Endothelial cell of umbilical vein (primary cell): ENCODE measurements at regions of chr9 and their contacts with region 1.

Region 1: DNA sequence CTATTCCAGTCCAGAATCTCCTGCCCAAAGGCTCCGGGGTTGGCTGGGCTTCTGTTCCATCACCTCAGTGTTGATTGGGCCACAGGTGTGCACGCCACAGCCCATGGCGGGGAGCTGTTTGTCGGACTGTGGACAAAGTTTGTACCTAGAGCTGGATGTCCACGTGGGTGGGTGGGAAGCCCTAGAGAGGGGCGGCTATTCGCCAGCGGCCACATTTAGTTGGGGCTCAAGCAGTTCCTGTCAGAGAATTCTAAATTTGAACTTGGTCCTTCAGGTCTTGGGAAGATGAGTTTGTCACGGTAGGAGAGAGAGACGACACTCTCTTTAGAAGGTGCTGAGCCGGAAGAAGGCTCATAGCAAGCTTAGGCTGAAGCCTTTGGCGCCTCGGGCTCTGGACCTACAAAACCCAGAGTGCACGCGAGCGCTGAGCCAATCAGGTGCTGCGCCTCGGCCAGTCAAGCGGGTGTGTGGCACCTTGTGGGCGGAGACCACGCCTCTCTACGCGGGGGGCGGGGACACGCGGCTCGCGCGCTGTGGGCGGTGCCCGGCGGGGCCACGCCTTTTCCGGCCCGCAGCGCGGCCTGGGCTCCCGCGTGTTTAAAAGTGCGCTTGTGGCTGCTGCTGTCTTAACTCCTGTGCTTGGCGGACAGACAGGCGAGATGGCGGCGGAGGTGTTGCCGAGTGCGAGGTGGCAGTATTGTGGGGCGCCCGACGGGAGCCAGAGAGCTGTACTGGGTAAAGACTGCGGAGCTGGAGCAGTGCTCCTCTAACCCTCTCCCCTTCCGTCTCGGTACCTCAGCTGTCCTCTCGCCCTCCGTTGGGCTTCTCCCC is at the start of gene POLR1E:
- DNase-seq: peak; percentile 92
- H3K4me3 ChIP-seq: peak within 1 kb of the TSS; percentile 46 to 78 (median 76)
- H3K27ac ChIP-seq: peak within 1 kb of the TSS; percentile 36
- H3K4me1 ChIP-seq: peaks cover 16% of the 10 kb centered on the region
- H3K27me3 ChIP-seq: peaks cover 3 to 6% of the 10 kb centered on the region in 2 experiments
- CTCF ChIP-seq: no peak
- POLR2A ChIP-seq: peak; percentile 94
- total RNA-seq, gene POLR1E: 17.2 and 21.2 TPM in 2 replicates

Region 2: GRCh38 chr9:37471942-37472679 is 13.5 kb before region 1 on chr9:
- CTCF ChIA-PET with region 1: interaction called, 4 read pairs
- POLR2A ChIA-PET with region 1: no interaction called
- dilution Hi-C with region 1: no loop called
- intact Hi-C with region 1: loop called (anchors 1 kb)
- DNase-seq: peak; percentile 86
- H3K4me3 ChIP-seq: peak overlapping the region in 2 of 3 experiments; percentile 11 to 38
- H3K27ac ChIP-seq: peak overlapping the region; percentile 78
- H3K4me1 ChIP-seq: peaks cover 9% of the 10 kb centered on the region
- H3K27me3 ChIP-seq: peaks cover 0 to 2% of the 10 kb centered on the region in 2 experiments
- CTCF ChIP-seq: no peak
- POLR2A ChIP-seq: no peak

Region 3: DNA sequence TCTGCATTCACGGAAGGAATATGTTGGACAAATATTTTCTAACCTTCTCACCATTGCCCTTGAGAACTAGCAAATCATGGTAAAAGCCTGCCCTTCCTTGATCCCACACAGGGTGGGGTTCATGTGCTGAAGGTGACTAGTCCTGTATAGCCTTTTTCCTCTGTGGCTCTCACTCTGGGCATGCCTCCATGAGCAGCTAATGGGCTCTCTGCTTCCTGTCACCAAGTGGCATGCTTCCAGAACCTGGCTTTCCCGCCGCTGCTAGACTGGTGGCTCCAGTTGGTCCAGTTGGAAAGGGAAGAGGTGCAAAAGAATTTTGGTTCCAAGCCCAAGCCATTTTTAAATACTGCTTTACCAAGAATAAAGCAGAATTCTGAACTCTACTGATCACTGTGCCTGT is 55.0 kb after region 1 on chr9:
- CTCF ChIA-PET with region 1: no interaction called
- POLR2A ChIA-PET with region 1: no interaction called
- dilution Hi-C with region 1: no loop called
- intact Hi-C with region 1: no loop called
- DNase-seq: no peak
- H3K4me3 ChIP-seq: no peak overlapping the region
- H3K27ac ChIP-seq: no peak overlapping the region
- H3K4me1 ChIP-seq: no peaks in the 10 kb centered on the region
- H3K27me3 ChIP-seq: no peaks in the 10 kb centered on the region
- CTCF ChIP-seq: no peak
- POLR2A ChIP-seq: no peak

Region 4: GRCh38 chr9:37575921-37576721 is 90.5 kb after region 1 on chr9 and contains the start of gene FBXO10:
- CTCF ChIA-PET with region 1: interaction called, 8 read pairs
- POLR2A ChIA-PET with region 1: no interaction called
- dilution Hi-C with region 1: no loop called
- intact Hi-C with region 1: loop called (anchors 2 kb)
- DNase-seq: peak; percentile 78
- H3K4me3 ChIP-seq: peak within 1 kb of the TSS; percentile 68 to 85 (median 70)
- H3K27ac ChIP-seq: peak within 1 kb of the TSS; percentile 45
- H3K4me1 ChIP-seq: peaks cover 21% of the 10 kb centered on the region
- H3K27me3 ChIP-seq: no peaks in the 10 kb centered on the region
- CTCF ChIP-seq: no peak
- POLR2A ChIP-seq: peak; percentile 70
- total RNA-seq, gene FBXO10: 13.8 and 14.4 TPM in 2 replicates

Region 5: GRCh38 chr9:37746848-37747753 is 261.5 kb after region 1 on chr9:
- CTCF ChIA-PET with region 1: interaction called, 3 read pairs
- POLR2A ChIA-PET with region 1: no interaction called
- dilution Hi-C with region 1: no loop called
- intact Hi-C with region 1: loop called (anchors 2 kb)
- DNase-seq: peak; percentile 64
- H3K4me3 ChIP-seq: no peak overlapping the region
- H3K27ac ChIP-seq: no peak overlapping the region
- H3K4me1 ChIP-seq: no peaks in the 10 kb centered on the region
- H3K27me3 ChIP-seq: peaks cover 0 to 6% of the 10 kb centered on the region in 2 experiments
- CTCF ChIP-seq: peak; percentile 84 to 91
- POLR2A ChIP-seq: no peak

Region 6: GRCh38 chr9:37903647-37904444 is 418.2 kb after region 1 on chr9 and contains the start of gene SLC25A51:
- CTCF ChIA-PET with region 1: interaction called, 6 read pairs
- POLR2A ChIA-PET with region 1: no interaction called
- dilution Hi-C with region 1: no loop called
- intact Hi-C with region 1: loop called (anchors 2 kb)
- DNase-seq: peak; percentile 94
- H3K4me3 ChIP-seq: peak within 1 kb of the TSS; percentile 29 to 90 (median 74)
- H3K27ac ChIP-seq: peak within 1 kb of the TSS; percentile 5
- H3K4me1 ChIP-seq: peaks cover 21% of the 10 kb centered on the region
- H3K27me3 ChIP-seq: no peaks in the 10 kb centered on the region
- CTCF ChIP-seq: peak; percentile 98 to 100
- POLR2A ChIP-seq: peak; percentile 80
- total RNA-seq, gene SLC25A51: 36.2 and 38.3 TPM in 2 replicates

Region 7: DNA sequence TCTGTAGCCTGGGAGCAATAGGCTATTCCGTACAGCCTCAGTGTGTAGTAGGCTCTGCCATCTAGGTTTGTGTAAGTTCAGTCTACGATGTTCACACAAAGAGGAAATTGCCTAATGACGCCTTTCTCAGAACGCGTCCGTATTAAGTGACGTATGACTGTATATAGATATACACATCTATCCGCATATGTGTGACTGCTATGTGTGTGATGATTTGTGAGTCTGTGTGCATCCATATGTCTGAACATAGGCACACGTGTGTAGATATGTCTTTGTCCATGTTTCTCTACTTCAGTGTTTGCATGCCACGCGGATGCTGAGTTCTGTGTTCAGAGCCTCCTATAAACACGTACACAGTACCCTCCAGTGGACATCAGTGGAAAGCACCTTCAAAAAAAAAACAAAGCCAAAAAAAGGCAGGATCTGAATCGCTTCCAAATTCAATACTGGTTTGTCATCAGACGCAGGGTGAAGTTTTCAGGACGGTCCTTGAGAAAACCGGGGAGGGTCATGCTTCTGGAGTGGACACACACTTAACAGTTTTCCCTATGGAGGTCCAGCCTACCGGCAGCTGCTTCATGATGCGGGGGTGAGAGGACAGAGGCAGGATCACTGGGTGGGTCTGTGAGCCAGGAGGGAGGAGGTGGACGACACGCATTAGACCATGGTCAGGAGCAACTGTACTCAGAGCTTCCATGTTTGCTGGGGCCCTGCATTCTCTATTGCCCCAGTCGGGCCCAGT is 877.4 kb after region 1 on chr9:
- CTCF ChIA-PET with region 1: no interaction called
- POLR2A ChIA-PET with region 1: no interaction called
- dilution Hi-C with region 1: no loop called
- intact Hi-C with region 1: loop called (anchors 2 kb)
- DNase-seq: peak; percentile 66
- H3K4me3 ChIP-seq: no peak overlapping the region
- H3K27ac ChIP-seq: no peak overlapping the region
- H3K4me1 ChIP-seq: no peaks in the 10 kb centered on the region
- H3K27me3 ChIP-seq: peaks cover 2 to 3% of the 10 kb centered on the region in 2 experiments
- CTCF ChIP-seq: peak; percentile 47 to 55
- POLR2A ChIP-seq: no peak

Region 8: DNA sequence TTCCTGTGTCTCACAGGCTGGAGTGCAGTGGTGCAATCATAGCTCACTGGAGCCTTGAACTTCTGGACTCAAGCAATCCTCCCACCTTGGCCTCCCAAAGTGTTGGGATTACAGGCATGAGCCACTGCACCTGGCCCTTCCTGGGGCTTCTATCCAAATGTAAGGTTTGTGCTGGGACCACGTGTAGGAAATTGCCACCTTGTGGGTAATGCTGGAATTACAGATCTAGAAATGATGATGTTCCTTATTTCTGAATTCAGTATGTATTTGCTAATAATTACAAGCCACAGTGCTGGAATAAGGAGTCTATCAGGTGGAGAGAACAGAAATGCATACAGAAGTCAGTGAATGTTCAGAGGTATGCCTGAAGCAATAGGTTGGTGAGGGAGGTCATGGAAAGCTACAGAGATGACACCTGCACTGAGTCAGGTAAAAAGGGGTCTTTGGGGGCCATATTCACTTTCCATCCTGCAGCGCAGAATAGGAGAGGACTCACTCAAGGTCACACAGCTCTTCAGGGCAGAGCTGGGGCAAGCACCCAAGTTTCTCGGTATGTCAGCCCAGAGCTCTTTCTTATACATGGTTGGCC is 947.4 kb after region 1 on chr9:
- CTCF ChIA-PET with region 1: no interaction called
- POLR2A ChIA-PET with region 1: no interaction called
- dilution Hi-C with region 1: no loop called
- intact Hi-C with region 1: loop called (anchors 2 kb)
- DNase-seq: peak; percentile 37
- H3K4me3 ChIP-seq: no peak overlapping the region
- H3K27ac ChIP-seq: no peak overlapping the region
- H3K4me1 ChIP-seq: no peaks in the 10 kb centered on the region
- H3K27me3 ChIP-seq: peaks cover 5 to 8% of the 10 kb centered on the region in 2 experiments
- CTCF ChIP-seq: peak; percentile 40 to 46
- POLR2A ChIP-seq: no peak